ENCODE measurements at regions of chr17 and their contacts with region 1.

Region 1: DNA sequence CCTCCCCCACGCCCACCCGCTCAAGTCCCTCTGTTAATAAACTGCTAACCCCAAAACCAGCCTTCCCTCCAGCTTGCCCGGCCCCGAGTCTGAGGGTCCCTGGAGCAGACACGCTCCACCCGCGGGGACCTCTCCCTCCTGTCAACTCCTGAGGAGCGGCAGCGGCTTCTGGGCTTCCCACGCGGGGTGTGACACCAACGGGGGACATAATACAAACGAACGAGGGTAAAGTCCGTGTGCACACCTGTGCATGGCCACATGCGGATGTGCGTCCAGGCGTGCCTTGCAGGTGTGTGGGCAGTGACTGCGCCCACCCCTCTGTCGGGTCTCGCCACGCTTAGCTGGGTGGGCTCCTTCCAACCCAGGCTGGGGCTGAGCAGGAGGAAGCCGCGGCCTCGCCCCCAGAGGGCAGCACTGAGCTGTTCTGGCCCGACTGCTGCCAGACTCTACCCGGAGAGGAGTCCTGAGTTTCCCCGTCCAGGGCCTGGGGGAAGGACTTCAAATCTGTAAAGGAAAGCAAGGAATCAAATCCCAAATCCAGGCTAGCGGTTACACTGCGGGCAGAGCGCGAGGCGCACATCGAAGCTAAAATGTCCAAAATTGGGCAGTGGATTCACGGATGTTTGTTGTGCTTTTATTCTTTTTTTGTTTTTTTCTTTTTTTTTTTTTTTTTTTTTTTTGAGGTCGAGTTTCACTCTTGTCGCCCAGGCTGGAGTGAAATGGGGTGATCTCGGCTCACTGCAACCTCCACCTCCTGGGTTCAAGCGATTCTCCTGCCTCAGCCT is 24.2 kb upstream of the KRT17 start:
- H3K4me3 Mint-ChIP-seq: peak overlapping the region; percentile 69
- H3K27ac Mint-ChIP-seq: peak overlapping the region; percentile 69
- H3K4me1 Mint-ChIP-seq: peaks cover 51% of the 10 kb centered on the region
- H3K27me3 Mint-ChIP-seq: peaks cover 8% of the 10 kb centered on the region

Region 2: DNA sequence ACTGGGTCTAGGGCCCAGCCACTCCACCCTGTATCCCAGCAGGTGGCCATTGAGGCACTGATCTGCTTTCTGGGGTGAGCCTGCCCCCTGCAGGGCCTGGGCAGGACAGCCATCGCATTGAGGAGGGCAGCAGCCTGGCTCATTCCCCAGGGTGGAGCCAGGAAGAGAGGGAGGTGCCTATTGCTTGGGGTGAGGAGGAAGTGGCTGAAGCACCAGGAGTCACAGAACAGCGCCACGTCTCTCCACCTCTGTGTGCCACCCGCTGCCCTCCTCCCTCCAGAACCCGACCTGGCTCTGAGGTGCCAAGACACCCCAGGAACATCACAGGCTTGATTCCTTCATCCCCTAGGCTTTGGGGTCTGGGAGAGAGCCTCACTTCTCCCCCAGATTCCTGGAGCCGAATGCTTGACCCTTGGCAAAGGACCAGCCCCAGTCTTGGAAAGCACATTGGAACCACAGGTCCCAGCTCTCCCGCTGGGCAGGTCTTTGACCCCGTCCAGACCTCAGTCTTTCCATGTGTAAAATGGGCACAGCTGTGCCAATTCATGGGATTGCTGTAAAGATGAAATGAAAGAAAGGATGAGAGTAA is 151.7 kb before region 1 on chr17:
- intact Hi-C with region 1: loop called (anchors 5 kb)
- H3K4me3 Mint-ChIP-seq: peak overlapping the region; percentile 17
- H3K27ac Mint-ChIP-seq: peak overlapping the region; percentile 68
- H3K4me1 Mint-ChIP-seq: peaks cover 78% of the 10 kb centered on the region
- H3K27me3 Mint-ChIP-seq: peaks cover 6% of the 10 kb centered on the region

Region 3: GRCh38 chr17:41579484-41580243 is 68.9 kb before region 1 on chr17:
- intact Hi-C with region 1: loop called (anchors 1 kb)
- H3K4me3 Mint-ChIP-seq: no peak overlapping the region
- H3K27ac Mint-ChIP-seq: peak overlapping the region; percentile 23
- H3K4me1 Mint-ChIP-seq: peaks cover 15% of the 10 kb centered on the region
- H3K27me3 Mint-ChIP-seq: peaks cover 54% of the 10 kb centered on the region

Region 4: GRCh38 chr17:41613277-41614082 is 35.1 kb before region 1 on chr17:
- intact Hi-C with region 1: loop called (anchors 5 kb)
- H3K4me3 Mint-ChIP-seq: no peak overlapping the region
- H3K27ac Mint-ChIP-seq: no peak overlapping the region
- H3K4me1 Mint-ChIP-seq: peaks cover 36% of the 10 kb centered on the region
- H3K27me3 Mint-ChIP-seq: peaks cover 69% of the 10 kb centered on the region

Region 5: GRCh38 chr17:41635121-41636097 is 13.2 kb before region 1 on chr17:
- intact Hi-C with region 1: no loop called
- H3K4me3 Mint-ChIP-seq: no peak overlapping the region
- H3K27ac Mint-ChIP-seq: peak overlapping the region; percentile 64
- H3K4me1 Mint-ChIP-seq: peaks cover 51% of the 10 kb centered on the region
- H3K27me3 Mint-ChIP-seq: no peaks in the 10 kb centered on the region

Measured in dendritic cell treated with granulocyte-macrophage colony-stimulating factor and Interleukin-4, amounts not matched to agents 40 ng/mL and 50 ng/mL, for 4 days (primary cell).